Naive thymus-derived CD4-positive, alpha-beta T cell (primary cell): ENCODE measurements at regions of chr7 and their contacts with region 1.

Region 1: DNA sequence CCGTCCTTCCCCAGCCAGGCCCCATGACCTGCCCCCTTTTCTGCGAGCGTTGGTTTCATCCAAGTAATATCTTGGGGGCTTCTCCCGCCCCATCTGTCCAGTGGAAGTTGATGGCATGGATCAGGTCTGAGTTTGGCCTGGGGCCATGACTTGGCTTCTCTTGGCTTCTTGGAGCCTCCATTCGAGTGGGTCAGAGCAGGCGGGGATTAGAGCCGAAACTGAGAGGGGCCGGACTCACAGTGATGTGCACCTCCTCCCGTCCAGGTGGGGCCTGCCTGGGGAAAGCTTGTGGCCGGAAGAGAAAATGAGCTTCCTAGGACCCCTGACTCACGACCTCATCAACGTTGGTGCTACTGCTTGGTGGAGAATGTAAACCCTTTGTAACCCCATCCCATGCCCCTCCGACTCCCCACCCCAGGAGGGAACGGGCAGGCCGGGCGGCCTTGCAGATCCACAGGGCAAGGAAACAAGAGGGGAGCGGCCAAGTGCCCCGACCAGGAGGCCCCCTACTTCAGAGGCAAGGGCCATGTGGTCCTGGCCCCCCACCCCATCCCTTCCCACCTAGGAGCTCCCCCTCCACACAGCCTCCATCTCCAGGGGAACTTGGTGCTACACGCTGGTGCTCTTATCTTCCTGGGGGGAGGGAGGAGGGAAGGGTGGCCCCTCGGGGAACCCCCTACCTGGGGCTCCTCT is 15.1 kb upstream of the LIMK1 start:
- DNase-seq: no peak
- ATAC-seq: no peak
- H3K4me3 ChIP-seq: no peak overlapping the region
- H3K4me3 Mint-ChIP-seq: no peak overlapping the region
- H3K27ac ChIP-seq: no peak overlapping the region
- H3K27ac Mint-ChIP-seq: no peak overlapping the region
- H3K4me1 ChIP-seq: no peaks in the 10 kb centered on the region
- H3K4me1 Mint-ChIP-seq: no peaks in the 10 kb centered on the region
- H3K27me3 ChIP-seq: no peaks in the 10 kb centered on the region
- H3K27me3 Mint-ChIP-seq: no peaks in the 10 kb centered on the region

Region 2: GRCh38 chr7:74051629-74052410 is 16.7 kb before region 1 on chr7:
- CTCF ChIA-PET with region 1: no interaction called
- POLR2A ChIA-PET with region 1: no interaction called
- intact Hi-C with region 1: no loop called
- DNase-seq: no peak
- ATAC-seq: no peak
- H3K4me3 ChIP-seq: no peak overlapping the region
- H3K4me3 Mint-ChIP-seq: no peak overlapping the region
- H3K27ac ChIP-seq: no peak overlapping the region
- H3K27ac Mint-ChIP-seq: no peak overlapping the region
- H3K4me1 ChIP-seq: no peaks in the 10 kb centered on the region
- H3K4me1 Mint-ChIP-seq: peaks cover 0 to 5% (median 0%) of the 10 kb centered on the region in 7 donors
- H3K27me3 ChIP-seq: no peaks in the 10 kb centered on the region
- H3K27me3 Mint-ChIP-seq: peaks cover 0 to 4% (median 0%) of the 10 kb centered on the region in 5 donors

Region 3: GRCh38 chr7:74083117-74083876 is 14.8 kb after region 1 on chr7 and contains the start of gene LIMK1:
- CTCF ChIA-PET with region 1: interaction called, 4 read pairs
- POLR2A ChIA-PET with region 1: no interaction called
- intact Hi-C with region 1: loop called in 1 of 2 experiments (anchors 1 kb)
- DNase-seq: peak; percentile 71 to 90 (median 83)
- ATAC-seq: peak; percentile 98
- H3K4me3 ChIP-seq: peak within 1 kb of the TSS; percentile 44
- H3K4me3 Mint-ChIP-seq: peak within 1 kb of the TSS; percentile 66 to 89 (median 80)
- H3K27ac ChIP-seq: peak within 1 kb of the TSS; percentile 69
- H3K27ac Mint-ChIP-seq: peak within 1 kb of the TSS in 8 of 9 donors; percentile 18 to 89 (median 76)
- H3K4me1 ChIP-seq: peaks cover 7 to 11% of the 10 kb centered on the region in 2 donors
- H3K4me1 Mint-ChIP-seq: peaks cover 0 to 18% (median 9%) of the 10 kb centered on the region in 7 donors
- H3K27me3 ChIP-seq: no peaks in the 10 kb centered on the region
- H3K27me3 Mint-ChIP-seq: no peaks in the 10 kb centered on the region
- total RNA-seq, gene LIMK1: 11.0 to 19.7 (median 14.1) TPM

Region 4: DNA sequence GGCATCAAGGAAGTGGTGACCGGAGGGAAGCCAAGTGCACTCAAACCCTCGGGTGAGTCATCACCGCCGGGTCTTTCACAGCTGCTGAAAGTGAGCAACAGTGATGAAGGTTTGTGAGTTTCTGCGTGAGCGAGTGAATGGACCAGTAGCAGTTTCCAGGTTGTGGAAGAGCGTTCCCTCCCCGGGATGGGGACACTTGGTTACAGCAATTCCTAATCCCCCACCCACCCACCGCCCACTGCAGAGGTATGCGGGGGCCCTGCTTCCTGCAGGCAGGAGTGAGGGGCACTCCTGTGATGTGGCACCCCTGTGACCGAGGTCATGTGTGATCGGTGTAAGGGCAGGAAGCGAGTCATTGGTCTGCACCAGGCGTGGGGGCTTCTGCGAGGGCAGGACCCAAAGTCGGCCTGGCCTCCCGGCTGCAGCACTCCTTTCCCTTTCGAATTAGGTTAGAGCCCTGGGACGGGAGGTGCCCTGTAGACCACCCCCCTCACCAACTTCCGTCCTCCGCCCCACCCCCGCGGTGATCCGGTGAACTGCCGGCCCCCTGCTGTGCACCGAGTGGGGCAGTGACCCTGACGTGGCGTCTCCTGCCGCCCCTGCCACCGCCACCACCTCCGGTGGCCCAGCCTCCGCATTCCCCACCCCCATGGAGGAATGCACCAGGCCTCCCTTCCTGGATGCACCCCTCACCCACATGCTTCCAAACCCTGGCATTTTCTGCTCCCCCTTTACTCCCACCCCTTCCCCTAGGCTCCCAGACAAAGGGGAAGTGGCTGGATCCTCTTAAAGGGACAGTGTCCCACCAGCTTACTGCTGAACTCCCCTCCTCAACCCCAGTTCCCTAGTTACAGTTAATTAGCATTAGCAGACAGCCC is 25.9 kb after region 1 on chr7:
- CTCF ChIA-PET with region 1: no interaction called
- POLR2A ChIA-PET with region 1: no interaction called
- intact Hi-C with region 1: loop called in 1 of 2 experiments (anchors 1 kb)
- DNase-seq: peak; percentile 21 to 71 (median 29)
- ATAC-seq: peak; percentile 83
- H3K4me3 ChIP-seq: peak overlapping the region; percentile 77
- H3K4me3 Mint-ChIP-seq: peak overlapping the region; percentile 83 to 91 (median 88)
- H3K27ac ChIP-seq: peak overlapping the region; percentile 57
- H3K27ac Mint-ChIP-seq: peak overlapping the region; percentile 83 to 98 (median 90)
- H3K4me1 ChIP-seq: peaks cover 11 to 16% of the 10 kb centered on the region in 2 donors
- H3K4me1 Mint-ChIP-seq: peaks cover 3 to 23% (median 16%) of the 10 kb centered on the region in 7 donors
- H3K27me3 ChIP-seq: no peaks in the 10 kb centered on the region
- H3K27me3 Mint-ChIP-seq: no peaks in the 10 kb centered on the region

Region 5: GRCh38 chr7:74173866-74174605 is 105.5 kb after region 1 on chr7 and contains the start of gene EIF4H:
- CTCF ChIA-PET with region 1: interaction called, 4 read pairs
- POLR2A ChIA-PET with region 1: interaction called, 10 read pairs
- intact Hi-C with region 1: loop called in 1 of 2 experiments (anchors 1 kb)
- DNase-seq: peak; percentile 90 to 97 (median 95)
- ATAC-seq: peak; percentile 97
- H3K4me3 ChIP-seq: peak within 1 kb of the TSS; percentile 87
- H3K4me3 Mint-ChIP-seq: peak within 1 kb of the TSS; percentile 86 to 98 (median 92)
- H3K27ac ChIP-seq: peak within 1 kb of the TSS; percentile 99
- H3K27ac Mint-ChIP-seq: peak within 1 kb of the TSS; percentile 88 to 97 (median 94)
- H3K4me1 ChIP-seq: peaks cover 41 to 43% of the 10 kb centered on the region in 2 donors
- H3K4me1 Mint-ChIP-seq: peaks cover 32 to 57% (median 47%) of the 10 kb centered on the region in 7 donors
- H3K27me3 ChIP-seq: no peaks in the 10 kb centered on the region
- H3K27me3 Mint-ChIP-seq: no peaks in the 10 kb centered on the region
- total RNA-seq, gene EIF4H: 163 to 284 (median 223) TPM

Region 6: DNA sequence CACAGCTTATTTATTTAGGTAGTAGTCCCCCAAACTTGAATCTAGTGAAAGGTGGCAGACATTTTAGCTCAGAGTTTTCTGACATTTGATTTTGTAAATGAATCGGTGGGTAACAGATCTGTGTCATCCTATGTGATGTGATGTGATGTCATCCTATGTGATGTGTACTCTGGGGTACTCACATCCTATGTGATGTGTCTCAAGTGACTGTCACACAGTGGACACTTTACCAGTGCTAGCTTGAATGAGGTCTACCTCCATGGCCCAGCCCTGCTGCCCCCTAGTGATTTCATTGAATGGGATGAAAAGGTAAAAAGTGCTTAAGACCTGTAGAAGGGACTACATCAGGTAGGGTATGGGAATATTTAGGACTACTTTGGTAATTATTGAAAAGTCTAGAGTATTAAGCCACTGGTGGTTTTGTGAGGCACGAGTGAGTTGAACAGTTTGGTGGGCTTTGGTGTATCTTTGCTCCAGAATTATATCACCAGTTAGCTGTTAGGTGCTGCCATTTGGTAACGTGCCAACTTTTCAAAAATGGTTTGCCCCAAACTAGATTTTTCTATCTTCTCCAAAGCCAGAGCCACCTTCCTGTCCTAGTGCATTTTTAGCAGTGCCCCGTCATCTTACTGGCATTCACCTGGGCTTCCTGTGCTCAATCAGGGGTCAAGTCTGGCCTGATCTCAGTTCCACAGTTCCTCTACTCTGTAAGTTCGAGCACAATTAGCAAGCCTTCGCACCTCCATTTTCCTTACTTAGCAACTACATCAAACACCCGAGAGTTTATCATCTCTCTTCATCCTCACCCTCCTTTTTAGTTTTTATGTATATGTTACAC is 115.3 kb after region 1 on chr7:
- CTCF ChIA-PET with region 1: no interaction called
- POLR2A ChIA-PET with region 1: no interaction called
- intact Hi-C with region 1: loop called (anchors 1 to 2 kb)
- DNase-seq: peak in 1 of 9 donors; percentile 22
- ATAC-seq: peak; percentile 68
- H3K4me3 ChIP-seq: no peak overlapping the region
- H3K4me3 Mint-ChIP-seq: peak overlapping the region; percentile 30 to 75 (median 59)
- H3K27ac ChIP-seq: peak overlapping the region; percentile 36
- H3K27ac Mint-ChIP-seq: peak overlapping the region in 8 of 9 donors; percentile 47 to 85 (median 66)
- H3K4me1 ChIP-seq: peaks cover 38 to 72% of the 10 kb centered on the region in 2 donors
- H3K4me1 Mint-ChIP-seq: peaks cover 72 to 98% (median 91%) of the 10 kb centered on the region in 7 donors
- H3K27me3 ChIP-seq: no peaks in the 10 kb centered on the region
- H3K27me3 Mint-ChIP-seq: no peaks in the 10 kb centered on the region

Region 7: DNA sequence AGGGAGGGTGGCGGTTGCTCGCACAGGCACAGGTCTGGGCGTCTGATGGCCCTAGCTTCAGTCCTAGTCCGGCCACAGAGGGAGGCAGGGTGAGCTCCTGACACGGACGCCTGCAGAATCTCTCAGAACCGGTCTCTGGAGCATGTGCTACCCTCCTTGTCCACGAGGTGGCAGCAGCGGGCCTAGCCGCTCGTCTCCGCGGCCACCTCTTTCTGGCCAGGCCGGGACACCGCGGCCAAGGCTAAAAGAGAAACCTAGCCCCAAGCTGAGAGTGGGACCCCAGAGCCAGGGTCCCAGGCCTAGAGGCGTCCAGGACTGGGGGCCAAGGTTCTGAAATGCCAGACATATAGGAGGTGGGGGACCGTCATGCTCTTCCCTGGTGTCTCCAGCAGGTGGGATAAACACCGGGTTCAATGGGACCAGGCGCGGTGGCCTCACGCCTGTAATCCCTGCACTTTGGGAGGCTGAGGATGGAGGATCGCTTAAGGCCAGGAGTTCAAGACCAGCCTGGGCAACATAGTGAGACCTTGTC is 138.1 kb after region 1 on chr7:
- CTCF ChIA-PET with region 1: interaction called, 10 read pairs
- POLR2A ChIA-PET with region 1: no interaction called
- intact Hi-C with region 1: loop called (anchors 1 to 2 kb)
- DNase-seq: peak; percentile 55 to 87 (median 72)
- ATAC-seq: peak; percentile 86
- H3K4me3 ChIP-seq: no peak overlapping the region
- H3K4me3 Mint-ChIP-seq: peak overlapping the region in 9 of 10 donors; percentile 12 to 55 (median 19)
- H3K27ac ChIP-seq: no peak overlapping the region
- H3K27ac Mint-ChIP-seq: peak overlapping the region in 2 of 9 donors; percentile 6 to 55
- H3K4me1 ChIP-seq: peaks cover 5 to 6% of the 10 kb centered on the region in 2 donors
- H3K4me1 Mint-ChIP-seq: peaks cover 14 to 29% (median 19%) of the 10 kb centered on the region in 7 donors
- H3K27me3 ChIP-seq: no peaks in the 10 kb centered on the region
- H3K27me3 Mint-ChIP-seq: peaks cover 0 to 6% (median 4%) of the 10 kb centered on the region in 5 donors

Region 8: DNA sequence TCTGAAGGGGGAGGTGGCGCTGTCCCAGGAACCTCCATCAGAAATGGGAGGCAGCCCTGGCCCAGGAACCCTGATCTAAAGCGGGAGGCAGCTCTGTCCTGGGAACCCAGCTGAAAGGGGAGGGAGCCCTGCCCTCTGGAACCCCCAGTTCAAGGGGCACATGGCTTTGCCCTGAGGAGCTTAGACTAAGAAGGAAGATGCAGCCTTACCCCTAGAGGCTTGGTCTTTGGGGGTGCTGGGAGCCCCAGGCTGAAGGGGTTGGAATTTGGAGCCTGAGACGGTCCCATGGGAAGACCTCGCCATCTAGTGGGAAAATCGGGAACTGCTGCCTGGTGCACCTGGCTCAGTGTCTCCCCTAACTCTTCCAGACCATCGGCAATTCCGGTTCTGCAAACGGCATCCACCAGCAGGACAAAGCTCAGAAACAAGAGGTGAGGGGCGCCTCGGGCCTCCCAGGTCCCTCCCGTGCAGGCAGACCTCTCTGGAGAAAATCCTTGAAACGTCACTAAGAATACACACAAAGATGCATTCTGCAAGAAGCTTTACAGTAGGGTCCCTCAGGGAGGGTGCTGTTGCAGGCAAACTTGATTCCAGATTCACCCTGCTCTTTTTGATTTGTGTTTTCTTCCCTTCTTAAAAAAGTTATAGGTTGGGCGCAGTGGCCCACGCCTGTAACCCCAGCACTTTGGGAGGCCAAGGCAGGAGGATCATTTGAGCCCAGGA is 332.8 kb after region 1 on chr7:
- CTCF ChIA-PET with region 1: interaction called, 34 read pairs
- POLR2A ChIA-PET with region 1: no interaction called
- intact Hi-C with region 1: loop called in 1 of 2 experiments (anchors 1 kb)
- DNase-seq: peak; percentile 33 to 77 (median 56)
- ATAC-seq: peak; percentile 76
- H3K4me3 ChIP-seq: no peak overlapping the region
- H3K4me3 Mint-ChIP-seq: no peak overlapping the region
- H3K27ac ChIP-seq: no peak overlapping the region
- H3K27ac Mint-ChIP-seq: no peak overlapping the region
- H3K4me1 ChIP-seq: no peaks in the 10 kb centered on the region
- H3K4me1 Mint-ChIP-seq: peaks cover 0 to 2% (median 0%) of the 10 kb centered on the region in 7 donors
- H3K27me3 ChIP-seq: no peaks in the 10 kb centered on the region
- H3K27me3 Mint-ChIP-seq: no peaks in the 10 kb centered on the region

Region 9: DNA sequence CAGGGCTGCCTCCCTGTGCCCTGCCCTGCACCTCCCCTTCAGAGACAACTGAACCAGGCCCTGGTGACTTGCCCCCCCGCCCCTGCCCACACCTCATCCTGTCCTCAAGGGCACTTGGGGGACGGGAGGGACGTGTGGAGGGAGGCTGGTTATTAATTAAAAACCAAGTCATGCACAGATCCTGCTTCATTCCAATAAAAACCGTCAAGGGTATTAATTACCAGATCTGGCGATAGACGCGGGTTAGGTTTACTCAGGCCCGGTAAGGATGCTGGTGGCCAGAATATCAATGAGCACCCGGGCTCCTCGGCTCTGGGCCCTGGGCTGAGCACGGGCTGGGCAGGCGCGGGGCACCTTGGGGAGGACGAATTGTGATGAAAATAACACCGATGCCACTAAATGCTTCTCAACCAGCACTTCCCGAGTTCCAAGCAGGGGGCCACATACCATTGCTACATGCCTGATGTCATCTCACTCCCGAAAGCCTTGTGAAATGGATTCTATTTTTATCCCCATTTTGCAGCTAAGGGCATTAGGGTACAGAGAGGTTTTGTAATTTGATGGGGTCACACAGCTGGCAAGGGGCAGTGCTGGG is 360.7 kb after region 1 on chr7:
- CTCF ChIA-PET with region 1: no interaction called
- POLR2A ChIA-PET with region 1: no interaction called
- intact Hi-C with region 1: no loop called
- DNase-seq: no peak
- ATAC-seq: no peak
- H3K4me3 ChIP-seq: no peak overlapping the region
- H3K4me3 Mint-ChIP-seq: no peak overlapping the region
- H3K27ac ChIP-seq: no peak overlapping the region
- H3K27ac Mint-ChIP-seq: no peak overlapping the region
- H3K4me1 ChIP-seq: no peaks in the 10 kb centered on the region
- H3K4me1 Mint-ChIP-seq: no peaks in the 10 kb centered on the region
- H3K27me3 ChIP-seq: no peaks in the 10 kb centered on the region
- H3K27me3 Mint-ChIP-seq: no peaks in the 10 kb centered on the region